ENCODE measurements at regions of chr19 and their contacts with region 1.

Region 1: GRCh38 chr19:506404-507285 is 652 bp upstream of the TPGS1 start:
- DNase-seq: peak; percentile 98 to 99 (median 99)
- H3K4me3 ChIP-seq: peak overlapping the region; percentile 61 to 97
- H3K4me3 Mint-ChIP-seq: peak overlapping the region; percentile 91 to 100 (median 99)
- H3K27ac ChIP-seq: peak overlapping the region; percentile 89
- H3K27ac Mint-ChIP-seq: peak overlapping the region; percentile 94 to 100 (median 100)
- H3K4me1 ChIP-seq: peaks cover 45% of the 10 kb centered on the region
- H3K4me1 Mint-ChIP-seq: peaks cover 13 to 55% (median 36%) of the 10 kb centered on the region in 4 donors
- H3K27me3 ChIP-seq: no peaks in the 10 kb centered on the region
- H3K27me3 Mint-ChIP-seq: no peaks in the 10 kb centered on the region

Region 2: DNA sequence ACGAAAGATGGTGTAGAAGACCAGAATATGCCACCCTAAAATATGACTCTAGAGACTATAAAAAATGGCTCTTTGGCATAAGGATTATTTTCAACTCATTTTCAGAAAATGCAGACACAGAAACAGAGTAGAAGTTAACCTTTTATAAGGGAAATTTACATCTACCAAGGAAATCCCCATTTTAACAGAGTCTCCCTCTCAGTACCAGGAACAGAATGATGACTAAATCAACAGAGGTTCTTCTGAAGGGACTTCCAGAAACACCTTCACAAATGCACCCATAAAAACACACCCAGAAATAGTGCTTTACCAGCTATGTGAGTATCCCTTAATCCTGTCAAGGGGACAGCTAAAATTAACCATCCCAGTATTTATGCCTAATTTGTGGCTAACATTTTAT is 244.5 kb before region 1 on chr19:
- CTCF ChIA-PET with region 1: interaction called, 6 read pairs
- POLR2A ChIA-PET with region 1: interaction called, 3 read pairs
- intact Hi-C with region 1: loop called (anchors 2 kb)
- DNase-seq: no peak
- H3K4me3 ChIP-seq: no peak overlapping the region
- H3K4me3 Mint-ChIP-seq: no peak overlapping the region
- H3K27ac ChIP-seq: no peak overlapping the region
- H3K27ac Mint-ChIP-seq: no peak overlapping the region
- H3K4me1 ChIP-seq: peaks cover 5% of the 10 kb centered on the region
- H3K4me1 Mint-ChIP-seq: peaks cover 2 to 7% (median 4%) of the 10 kb centered on the region in 4 donors
- H3K27me3 ChIP-seq: peaks cover 9% of the 10 kb centered on the region
- H3K27me3 Mint-ChIP-seq: peaks cover 24 to 27% of the 10 kb centered on the region in 2 donors

Region 3: GRCh38 chr19:408898-409515 is 97.6 kb before region 1 on chr19 and contains the start of gene C2CD4C:
- CTCF ChIA-PET with region 1: no interaction called
- POLR2A ChIA-PET with region 1: no interaction called
- intact Hi-C with region 1: loop called (anchors 1 kb)
- DNase-seq: peak in 4 of 5 donors; percentile 12 to 22 (median 14)
- H3K4me3 ChIP-seq: peak within 1 kb of the TSS in 1 of 2 donors; percentile 9
- H3K4me3 Mint-ChIP-seq: peak within 1 kb of the TSS; percentile 78 to 91 (median 86)
- H3K27ac ChIP-seq: no peak within 1 kb of the TSS
- H3K27ac Mint-ChIP-seq: peak within 1 kb of the TSS in 4 of 7 donors; percentile 18 to 73 (median 54)
- H3K4me1 ChIP-seq: peaks cover 12% of the 10 kb centered on the region
- H3K4me1 Mint-ChIP-seq: peaks cover 6 to 8% (median 6%) of the 10 kb centered on the region in 4 donors
- H3K27me3 ChIP-seq: peaks cover 9% of the 10 kb centered on the region
- H3K27me3 Mint-ChIP-seq: peaks cover 8 to 16% of the 10 kb centered on the region in 2 donors
- total RNA-seq, gene C2CD4C: not detected

Region 4: GRCh38 chr19:419266-419671 is 87.4 kb before region 1 on chr19:
- CTCF ChIA-PET with region 1: no interaction called
- POLR2A ChIA-PET with region 1: no interaction called
- intact Hi-C with region 1: no loop called
- DNase-seq: no peak
- H3K4me3 ChIP-seq: no peak overlapping the region
- H3K4me3 Mint-ChIP-seq: no peak overlapping the region
- H3K27ac ChIP-seq: no peak overlapping the region
- H3K27ac Mint-ChIP-seq: no peak overlapping the region
- H3K4me1 ChIP-seq: no peaks in the 10 kb centered on the region
- H3K4me1 Mint-ChIP-seq: no peaks in the 10 kb centered on the region
- H3K27me3 ChIP-seq: no peaks in the 10 kb centered on the region
- H3K27me3 Mint-ChIP-seq: peaks cover 2 to 3% of the 10 kb centered on the region in 2 donors

Region 5: DNA sequence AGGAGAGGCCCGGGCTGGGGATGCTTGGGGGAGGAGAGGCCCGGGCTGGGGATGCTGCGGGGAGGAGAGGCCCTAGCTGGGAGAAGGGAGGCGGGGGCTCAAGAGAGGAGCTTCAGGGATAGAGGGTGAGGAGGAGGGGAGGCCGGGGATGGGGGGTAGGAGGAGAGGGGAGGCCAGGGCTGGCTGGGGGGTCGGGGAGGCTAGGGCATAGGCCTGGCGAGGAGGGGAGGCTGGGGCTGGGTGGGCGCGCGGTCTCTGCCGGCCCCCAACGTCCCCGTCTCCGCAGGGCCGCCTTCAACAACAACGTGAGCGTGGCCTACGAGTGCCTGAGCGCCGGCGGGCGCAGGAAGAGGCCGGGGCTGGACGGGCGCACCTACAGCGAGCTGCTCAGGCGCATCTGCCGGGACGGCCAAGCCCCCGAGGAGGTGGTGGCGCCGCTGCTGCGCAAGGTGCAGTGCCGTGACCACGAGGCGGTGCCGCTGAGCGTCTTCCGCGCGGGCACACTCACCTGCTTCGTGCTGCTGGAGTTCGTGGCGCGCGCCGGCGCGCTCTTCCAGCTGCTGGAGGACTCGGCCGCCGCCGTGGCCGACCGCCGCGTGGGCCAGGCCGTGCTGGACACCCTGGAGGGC is 12.1 kb after region 1 on chr19:
- CTCF ChIA-PET with region 1: interaction called, 22 read pairs
- POLR2A ChIA-PET with region 1: interaction called, 30 read pairs
- intact Hi-C with region 1: no loop called
- DNase-seq: peak in 4 of 5 donors; percentile 58 to 68 (median 63)
- H3K4me3 ChIP-seq: no peak overlapping the region
- H3K4me3 Mint-ChIP-seq: peak overlapping the region in 1 of 8 donors; percentile 41
- H3K27ac ChIP-seq: no peak overlapping the region
- H3K27ac Mint-ChIP-seq: peak overlapping the region in 2 of 7 donors; percentile 18 to 43
- H3K4me1 ChIP-seq: no peaks in the 10 kb centered on the region
- H3K4me1 Mint-ChIP-seq: peaks cover 4 to 19% (median 13%) of the 10 kb centered on the region in 4 donors
- H3K27me3 ChIP-seq: no peaks in the 10 kb centered on the region
- H3K27me3 Mint-ChIP-seq: no peaks in the 10 kb centered on the region

Region 6: DNA sequence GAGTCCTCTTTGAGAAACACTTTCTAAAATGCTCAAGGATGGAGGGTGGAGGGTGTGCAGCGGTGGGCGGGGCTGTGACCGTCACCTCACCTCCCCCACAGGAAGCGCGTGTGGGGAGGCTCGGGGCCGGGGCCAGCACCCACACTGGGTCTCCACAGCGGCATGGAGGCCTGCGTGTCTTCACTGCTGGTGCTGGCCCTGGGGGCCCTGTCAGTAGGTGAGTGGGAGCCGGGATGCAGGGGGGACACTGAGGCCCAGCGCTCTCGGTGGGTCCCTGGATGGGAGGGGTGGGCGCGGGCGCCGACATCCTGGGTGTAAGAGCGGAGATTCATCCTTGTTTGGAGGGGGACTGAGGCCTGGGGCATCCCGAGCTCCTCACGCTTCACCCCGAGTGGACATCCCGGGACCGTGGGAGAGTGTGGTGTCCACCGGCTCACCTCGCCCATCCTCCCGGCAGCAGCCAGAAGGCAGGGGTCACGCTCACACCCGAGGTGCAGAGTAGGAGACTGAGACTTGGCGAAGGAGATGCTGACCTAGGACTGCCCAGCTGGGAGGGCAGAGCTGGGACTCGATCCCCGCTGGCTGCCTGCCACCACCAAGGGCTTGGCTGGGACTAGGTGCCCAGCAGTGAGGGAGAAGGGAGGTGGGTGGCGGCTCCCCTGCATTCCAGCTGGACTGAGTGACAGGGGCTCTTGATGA is 37.4 kb after region 1 on chr19 and contains the start of gene GZMM:
- CTCF ChIA-PET with region 1: interaction called, 7 read pairs
- POLR2A ChIA-PET with region 1: interaction called, 8 read pairs
- intact Hi-C with region 1: loop called (anchors 2 kb)
- DNase-seq: peak; percentile 82 to 86 (median 84)
- H3K4me3 ChIP-seq: peak within 1 kb of the TSS; percentile 61 to 72
- H3K4me3 Mint-ChIP-seq: peak within 1 kb of the TSS; percentile 81 to 94 (median 88)
- H3K27ac ChIP-seq: peak within 1 kb of the TSS; percentile 72
- H3K27ac Mint-ChIP-seq: peak within 1 kb of the TSS; percentile 85 to 95 (median 91)
- H3K4me1 ChIP-seq: peaks cover 23% of the 10 kb centered on the region
- H3K4me1 Mint-ChIP-seq: peaks cover 14 to 26% (median 18%) of the 10 kb centered on the region in 4 donors
- H3K27me3 ChIP-seq: no peaks in the 10 kb centered on the region
- H3K27me3 Mint-ChIP-seq: no peaks in the 10 kb centered on the region
- total RNA-seq, gene GZMM: 25.5 to 28.7 TPM

Region 7: GRCh38 chr19:610801-611505 is 104.3 kb after region 1 on chr19:
- CTCF ChIA-PET with region 1: no interaction called
- POLR2A ChIA-PET with region 1: interaction called, 13 read pairs
- intact Hi-C with region 1: no loop called
- DNase-seq: peak; percentile 50 to 83 (median 69)
- H3K4me3 ChIP-seq: peak overlapping the region; percentile 39 to 71
- H3K4me3 Mint-ChIP-seq: peak overlapping the region; percentile 86 to 99 (median 94)
- H3K27ac ChIP-seq: peak overlapping the region; percentile 51
- H3K27ac Mint-ChIP-seq: peak overlapping the region; percentile 87 to 100 (median 96)
- H3K4me1 ChIP-seq: peaks cover 25% of the 10 kb centered on the region
- H3K4me1 Mint-ChIP-seq: peaks cover 9 to 41% (median 24%) of the 10 kb centered on the region in 4 donors
- H3K27me3 ChIP-seq: no peaks in the 10 kb centered on the region
- H3K27me3 Mint-ChIP-seq: peaks cover 0 to 2% of the 10 kb centered on the region in 2 donors

Region 8: GRCh38 chr19:662962-663681 is 156.5 kb after region 1 on chr19 and contains the start of gene RNF126:
- CTCF ChIA-PET with region 1: no interaction called
- POLR2A ChIA-PET with region 1: interaction called, 20 read pairs
- intact Hi-C with region 1: loop called (anchors 2 kb)
- DNase-seq: peak; percentile 86 to 90 (median 89)
- H3K4me3 ChIP-seq: peak within 1 kb of the TSS; percentile 83 to 99
- H3K4me3 Mint-ChIP-seq: peak within 1 kb of the TSS; percentile 94 to 100 (median 98)
- H3K27ac ChIP-seq: peak within 1 kb of the TSS; percentile 96
- H3K27ac Mint-ChIP-seq: peak within 1 kb of the TSS; percentile 97 to 100 (median 99)
- H3K4me1 ChIP-seq: peaks cover 46% of the 10 kb centered on the region
- H3K4me1 Mint-ChIP-seq: peaks cover 7 to 53% (median 34%) of the 10 kb centered on the region in 4 donors
- H3K27me3 ChIP-seq: no peaks in the 10 kb centered on the region
- H3K27me3 Mint-ChIP-seq: peaks cover 0 to 3% of the 10 kb centered on the region in 2 donors
- total RNA-seq, gene RNF126: 105 to 112 TPM